GM10248 (cell line): ENCODE measurements at regions of chr6 and their contacts with region 1.

Region 1: DNA sequence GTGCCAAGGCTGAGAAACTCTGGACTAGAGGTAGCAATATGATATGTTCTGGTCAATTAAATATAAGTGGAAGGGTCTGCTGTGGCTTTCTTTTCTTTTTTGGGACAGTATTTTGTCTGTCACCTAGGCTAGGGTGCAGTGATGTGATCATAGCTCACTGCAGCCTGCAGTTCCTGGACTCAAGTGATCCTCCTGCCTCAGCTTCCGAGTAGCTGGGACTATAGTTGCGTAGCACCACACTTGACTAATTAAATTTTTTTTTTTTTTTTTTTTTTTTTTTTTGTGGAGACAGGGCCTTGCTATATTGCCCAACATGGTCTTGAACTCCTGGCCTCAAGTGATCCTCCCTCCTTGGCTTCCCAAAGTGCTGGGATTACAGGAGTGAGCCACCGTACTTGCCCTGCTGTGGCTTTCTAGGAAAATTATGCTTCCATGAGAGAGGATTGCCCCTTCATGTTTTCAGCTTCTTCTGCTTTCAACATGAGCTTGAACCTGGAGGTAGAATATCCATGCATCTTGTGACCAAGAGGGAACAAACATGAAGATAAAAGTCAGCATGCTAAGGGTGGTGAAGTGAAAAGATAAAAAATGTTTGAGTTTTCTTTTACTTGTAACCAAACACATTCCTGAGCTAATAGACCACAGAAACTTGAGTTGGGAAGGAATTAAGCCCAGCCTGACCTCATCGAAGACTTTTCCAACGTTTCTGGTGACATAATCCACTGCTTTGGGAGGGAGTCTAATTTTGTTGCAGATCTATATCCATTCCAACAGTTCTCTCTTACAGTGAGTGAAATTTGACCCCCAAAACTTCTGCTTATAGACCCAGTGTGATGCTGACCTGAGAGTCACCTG is 75.1 kb downstream of the CARMIL1 start:
- DNase-seq: no peak
- CTCF ChIP-seq: no peak

Region 2: DNA sequence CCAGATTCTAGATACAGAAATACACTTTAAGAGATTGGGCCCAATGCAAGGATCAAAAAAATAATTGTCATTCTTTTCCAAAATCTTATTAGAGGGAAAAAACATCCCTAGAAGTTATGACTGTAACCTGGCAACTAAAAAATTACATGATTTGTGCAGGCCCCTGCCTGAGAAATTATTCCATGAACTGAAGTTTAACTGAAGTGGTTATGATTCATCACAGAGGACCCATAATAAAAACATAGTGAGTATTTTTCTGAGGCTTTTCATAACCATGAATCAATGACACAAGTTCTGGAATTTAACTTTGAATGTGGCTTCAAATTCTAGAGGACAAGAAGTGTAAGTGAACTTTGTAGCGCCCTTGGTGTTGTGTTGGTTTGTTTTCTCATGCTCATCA is 106.2 kb before region 1 on chr6:
- CTCF ChIA-PET with region 1: no interaction called
- POLR2A ChIA-PET with region 1: no interaction called
- DNase-seq: no peak
- CTCF ChIP-seq: no peak

Region 3: DNA sequence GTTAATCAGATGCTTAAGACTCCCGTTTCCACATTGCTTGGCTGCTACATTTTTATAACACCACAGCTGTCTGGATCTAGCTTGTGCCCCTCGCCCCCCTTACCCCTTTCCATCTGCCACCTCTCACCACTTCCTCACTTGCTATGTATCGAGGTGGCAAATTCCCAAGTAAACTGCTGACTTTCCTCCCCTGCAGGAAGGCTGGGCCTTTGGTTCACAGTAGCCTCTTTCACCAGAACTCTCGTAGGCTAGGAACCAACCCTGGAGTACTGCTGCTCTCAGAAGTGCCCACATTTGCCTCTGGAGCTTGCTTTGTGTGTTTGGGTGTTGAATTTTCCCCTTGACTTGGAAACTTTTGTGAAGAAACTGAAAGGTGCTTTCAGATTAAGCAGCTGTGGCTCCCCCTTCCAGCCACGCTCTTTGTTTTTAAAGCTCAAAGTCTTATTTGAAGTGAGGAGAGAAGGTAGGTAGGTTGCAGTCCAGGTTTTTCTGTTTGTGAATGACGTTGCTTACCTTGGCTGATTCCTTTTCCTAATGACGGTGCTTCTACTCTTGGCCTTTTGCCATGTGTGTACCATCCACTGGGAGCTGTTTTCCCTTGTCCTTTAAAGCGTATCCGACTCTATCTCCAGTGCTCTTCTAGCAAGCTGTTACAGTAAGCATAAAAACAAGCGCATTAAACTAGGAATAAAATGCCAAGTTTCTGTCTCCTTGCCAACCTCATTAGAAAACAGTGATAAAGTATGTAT is 15.3 kb after region 1 on chr6:
- CTCF ChIA-PET with region 1: interaction called, 10 read pairs
- POLR2A ChIA-PET with region 1: no interaction called
- DNase-seq: no peak
- CTCF ChIP-seq: no peak